Gastrocnemius medialis (tissue), 4 donors: ENCODE measurements at regions of chr6 and their contacts with region 1.

Region 1: GRCh38 chr6:40936818-40937251 is 102.2 kb downstream of the UNC5CL start:
- DNase-seq: no peak
- ATAC-seq: no peak
- H3K4me3 ChIP-seq: no peak overlapping the region
- H3K27ac ChIP-seq: no peak overlapping the region
- H3K4me1 ChIP-seq: peaks cover 0 to 12% of the 10 kb centered on the region in 2 donors
- H3K27me3 ChIP-seq: no peaks in the 10 kb centered on the region
- CTCF ChIP-seq: no peak
- POLR2A ChIP-seq: no peak

Region 2: GRCh38 chr6:40999569-40999968 is 62.7 kb after region 1 on chr6:
- in situ Hi-C with region 1: no loop called
- intact Hi-C with region 1: loop called (anchors 5 kb)
- DNase-seq: peak; percentile 16 to 34
- ATAC-seq: peak in 1 of 2 donors; percentile 42
- H3K4me3 ChIP-seq: no peak overlapping the region
- H3K27ac ChIP-seq: peak overlapping the region in 1 of 4 donors; percentile 78
- H3K4me1 ChIP-seq: peaks cover 37 to 45% of the 10 kb centered on the region in 2 donors
- H3K27me3 ChIP-seq: no peaks in the 10 kb centered on the region
- CTCF ChIP-seq: peak in 2 of 5 experiments; percentile 12 to 29
- POLR2A ChIP-seq: no peak